IMR-90 (cell line): ENCODE measurements at regions of chr18 and their contacts with region 1.

Region 1: DNA sequence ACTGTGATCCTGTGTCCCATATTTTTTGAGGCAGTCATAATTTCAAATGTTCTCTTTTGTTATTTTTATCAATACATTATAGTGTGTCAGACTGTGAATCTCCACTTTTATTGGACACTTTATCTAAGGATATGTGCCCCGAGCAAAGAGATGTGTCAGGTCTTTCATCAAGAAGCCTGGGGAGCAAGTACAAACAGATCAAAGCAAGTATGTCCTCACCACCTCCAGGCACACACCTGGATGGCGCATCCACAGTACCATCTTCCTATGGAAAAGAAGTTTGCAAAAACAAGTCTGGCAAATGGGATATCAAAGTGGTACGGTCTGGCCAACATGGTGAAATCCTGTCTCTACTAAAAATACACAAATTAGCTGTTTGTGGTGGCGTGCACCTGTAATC is 81.0 kb upstream of the ZNF236 start:
- DNase-seq: no peak
- ATAC-seq: no peak
- H3K4me3 ChIP-seq: no peak overlapping the region
- H3K27ac ChIP-seq: no peak overlapping the region
- H3K4me1 ChIP-seq: 0 out of 2 replicates have a peak, but pooled peaks cover 2% of the 10 kb centered on the region
- H3K27me3 ChIP-seq: peaks cover under 1% of the 10 kb centered on the region; the same call in 1 of the 2 replicates
- CTCF ChIP-seq: no peak
- POLR2A ChIP-seq: no peak
- RAD21 ChIP-seq: no peak

Region 2: DNA sequence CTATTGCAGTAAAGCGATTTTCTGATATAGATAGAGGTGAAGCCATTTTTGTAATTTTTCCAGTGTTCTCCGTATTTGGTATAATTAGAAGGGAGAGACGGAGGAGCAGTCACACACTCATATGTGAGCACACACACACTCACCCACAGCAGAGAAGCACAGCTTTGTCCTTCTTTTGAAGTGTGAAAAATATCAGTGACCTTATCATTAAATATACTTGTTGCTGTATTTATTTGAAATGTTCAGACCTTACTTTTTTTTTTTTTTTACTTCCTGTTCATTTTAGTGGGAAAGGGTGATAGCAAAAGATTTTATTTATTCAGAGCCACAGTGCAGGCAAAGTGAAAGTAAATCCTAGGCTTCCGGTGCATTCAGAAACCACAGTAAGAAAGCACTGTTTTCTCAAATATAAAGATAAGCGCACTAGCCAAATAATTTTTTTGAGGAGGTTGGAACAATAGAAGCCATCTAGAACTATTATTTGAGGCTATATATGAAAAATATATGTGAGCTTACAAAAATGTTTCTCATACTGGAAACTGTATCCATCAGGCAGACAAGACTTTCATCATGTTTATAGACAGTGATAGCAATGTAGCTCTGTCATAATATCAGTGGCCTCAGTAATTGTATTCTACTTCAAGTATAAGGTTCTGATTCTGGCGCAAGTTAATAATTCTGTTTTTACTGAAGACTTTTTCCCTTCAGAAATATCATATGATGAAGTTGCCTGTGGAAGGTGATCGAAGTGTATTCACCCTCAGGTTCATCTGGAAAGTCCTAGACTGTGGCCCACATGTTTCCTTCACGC is 1493.5 kb before region 1 on chr18:
- CTCF ChIA-PET with region 1: no interaction called
- POLR2A ChIA-PET with region 1: interaction called, 13 read pairs
- dilution Hi-C with region 1: no loop called
- in situ Hi-C with region 1: no loop called
- intact Hi-C with region 1: no loop called
- DNase-seq: peak; percentile 65
- ATAC-seq: peak; percentile 72
- H3K4me3 ChIP-seq: peak overlapping the region; percentile 40
- H3K27ac ChIP-seq: peak overlapping the region; percentile 96
- H3K4me1 ChIP-seq: peaks cover 16% of the 10 kb centered on the region
- H3K27me3 ChIP-seq: no peaks in the 10 kb centered on the region
- CTCF ChIP-seq: no peak
- POLR2A ChIP-seq: no peak
- RAD21 ChIP-seq: no peak

Region 3: DNA sequence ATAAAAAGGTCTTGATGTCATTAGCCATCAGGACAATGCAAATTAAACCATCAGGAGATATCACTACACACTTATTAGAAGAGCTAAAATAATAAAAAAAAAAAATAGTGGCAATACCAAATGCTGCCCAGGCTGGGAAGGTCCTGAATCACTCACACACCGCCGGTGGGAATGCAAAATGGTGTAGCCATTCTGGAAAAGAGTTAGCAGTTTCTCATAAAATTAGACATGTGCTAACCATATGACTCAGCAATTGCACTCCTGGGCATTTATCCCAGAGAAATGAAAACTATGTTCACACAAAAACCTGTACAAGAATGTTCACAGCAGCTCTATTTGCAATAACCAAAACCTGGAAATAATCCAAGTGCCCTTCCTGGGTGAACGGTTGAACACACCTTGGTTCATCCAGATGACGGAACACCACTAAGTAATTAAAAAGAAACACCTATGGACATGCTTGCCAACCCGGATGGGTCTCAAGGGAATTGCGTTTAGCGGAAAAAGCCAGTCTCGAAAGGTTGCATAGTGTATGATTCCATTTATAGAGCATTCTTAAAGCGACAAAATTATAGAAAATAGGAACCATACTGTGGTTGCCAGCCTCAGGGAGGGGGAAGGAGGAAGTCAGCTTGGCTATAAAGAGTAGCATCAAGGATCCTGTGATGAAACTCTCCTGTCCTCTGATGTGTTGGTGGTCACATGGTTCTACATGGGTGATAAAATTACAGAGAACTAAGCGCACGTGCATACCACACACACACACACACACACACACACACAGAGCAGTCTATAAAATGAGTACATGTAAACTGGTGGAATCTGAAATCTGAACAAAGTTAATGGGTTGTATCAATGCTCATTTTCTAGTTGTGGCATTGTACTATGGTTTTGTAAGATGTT is 386.7 kb after region 1 on chr18:
- CTCF ChIA-PET with region 1: no interaction called
- POLR2A ChIA-PET with region 1: no interaction called
- dilution Hi-C with region 1: no loop called
- in situ Hi-C with region 1: no loop called
- intact Hi-C with region 1: no loop called
- DNase-seq: peak; percentile 89
- ATAC-seq: peak; percentile 68
- H3K4me3 ChIP-seq: no peak overlapping the region
- H3K27ac ChIP-seq: peak overlapping the region; percentile 51; the same call in 1 of the 2 replicates
- H3K4me1 ChIP-seq: peaks cover 20% of the 10 kb centered on the region
- H3K27me3 ChIP-seq: peaks cover 14% of the 10 kb centered on the region
- CTCF ChIP-seq: no peak
- POLR2A ChIP-seq: no peak
- RAD21 ChIP-seq: no peak